Activated CD4-positive, alpha-beta memory T cell treated with anti-CD3 and anti-CD28 coated beads, Interleukin-2, amount 10 ng/mL, durations not matched to agents 7 days and 5 days (primary cell): ENCODE measurements at regions of chr12 and their contacts with region 1.

Region 1: GRCh38 chr12:6533923-6534694 is at the start of gene GAPDH:
- DNase-seq: peak; percentile 93
- H3K4me3 Mint-ChIP-seq: peak within 1 kb of the TSS; percentile 96
- H3K27ac Mint-ChIP-seq: peak within 1 kb of the TSS; percentile 97
- H3K4me1 Mint-ChIP-seq: peaks cover 53% of the 10 kb centered on the region
- H3K27me3 Mint-ChIP-seq: no peaks in the 10 kb centered on the region
- total RNA-seq, gene GAPDH: 5,691 to 5,753 TPM

Region 2: DNA sequence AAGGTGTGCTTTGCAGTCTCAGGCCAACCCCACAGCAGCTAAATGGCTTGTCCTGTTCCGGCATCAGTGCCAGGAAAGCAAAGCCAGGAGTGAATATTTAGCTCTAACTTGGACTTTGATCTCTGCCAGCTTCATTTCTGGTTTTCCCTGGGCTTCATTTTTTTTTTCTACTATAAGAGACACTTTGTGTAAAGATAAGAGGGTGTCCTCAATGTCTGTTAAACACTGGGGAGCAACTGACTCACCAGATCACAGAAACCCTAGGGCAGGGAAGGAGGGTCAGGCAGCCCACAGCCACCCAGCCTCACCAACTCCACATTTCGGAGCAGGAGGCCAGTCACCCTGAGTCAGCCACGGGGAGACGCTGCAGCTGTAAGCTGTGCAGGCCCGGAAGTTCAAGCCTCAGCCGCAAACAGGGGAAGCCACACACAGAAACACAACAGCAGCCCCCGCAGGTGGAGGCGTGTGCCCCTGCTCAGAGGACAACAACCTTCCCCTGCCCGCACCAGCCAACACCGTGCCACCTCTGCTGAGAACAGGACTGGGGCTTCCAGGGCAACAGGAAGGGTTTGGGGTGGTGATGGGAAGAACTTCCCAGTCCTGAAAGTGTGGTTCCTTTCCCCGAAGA is 198.5 kb before region 1 on chr12:
- CTCF ChIA-PET with region 1: interaction called, 5 read pairs
- POLR2A ChIA-PET with region 1: interaction called, 10 read pairs
- DNase-seq: peak; percentile 90
- H3K4me3 Mint-ChIP-seq: no peak overlapping the region
- H3K27ac Mint-ChIP-seq: no peak overlapping the region
- H3K4me1 Mint-ChIP-seq: no peaks in the 10 kb centered on the region
- H3K27me3 Mint-ChIP-seq: no peaks in the 10 kb centered on the region

Region 3: GRCh38 chr12:6443361-6443983 is 90.6 kb before region 1 on chr12:
- CTCF ChIA-PET with region 1: interaction called, 7 read pairs
- POLR2A ChIA-PET with region 1: interaction called, 15 read pairs
- DNase-seq: no peak
- H3K4me3 Mint-ChIP-seq: peak overlapping the region; percentile 38
- H3K27ac Mint-ChIP-seq: peak overlapping the region; percentile 71
- H3K4me1 Mint-ChIP-seq: peaks cover 54% of the 10 kb centered on the region
- H3K27me3 Mint-ChIP-seq: no peaks in the 10 kb centered on the region

Region 4: DNA sequence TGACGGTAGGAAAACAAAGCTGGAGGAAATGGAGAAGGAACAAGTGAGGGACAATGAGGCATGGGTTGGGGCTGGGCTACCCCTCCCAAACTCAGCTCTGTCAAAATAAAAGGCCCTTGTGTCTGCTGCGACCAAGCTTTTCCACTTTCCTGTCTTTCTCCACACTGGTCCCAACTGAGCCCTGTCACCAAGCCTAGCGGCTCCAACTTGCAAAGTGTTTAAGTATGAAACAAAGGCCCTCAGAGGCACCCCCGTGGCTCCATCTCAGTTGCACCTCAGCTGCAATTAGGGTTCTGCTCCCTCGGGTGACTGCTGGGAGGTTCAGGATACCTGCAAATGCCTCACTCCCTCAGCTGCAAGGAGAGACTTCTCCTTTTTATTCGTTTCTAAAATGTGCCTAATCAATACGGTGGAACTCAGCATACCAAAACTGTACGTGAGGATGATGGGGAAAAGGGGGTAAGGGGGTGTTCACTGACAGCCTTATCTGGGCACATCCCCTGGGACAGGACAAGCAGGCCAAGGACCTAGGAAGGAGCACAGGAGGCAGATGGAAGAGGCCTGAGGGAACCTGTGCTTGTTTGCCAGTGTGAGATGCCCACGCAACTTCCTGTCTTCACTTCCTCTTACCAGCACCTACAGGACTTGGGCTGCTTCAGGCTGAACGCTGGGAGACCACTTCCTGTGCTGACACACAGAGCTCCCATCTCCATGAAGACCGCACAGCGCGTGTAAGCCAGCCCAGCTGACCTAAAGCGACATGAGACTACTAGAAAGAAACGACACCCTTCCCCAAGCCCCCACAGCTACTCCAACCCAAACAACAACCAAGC is 72.5 kb before region 1 on chr12:
- CTCF ChIA-PET with region 1: interaction called, 11 read pairs
- POLR2A ChIA-PET with region 1: interaction called, 77 read pairs
- DNase-seq: peak; percentile 91
- H3K4me3 Mint-ChIP-seq: peak overlapping the region; percentile 74
- H3K27ac Mint-ChIP-seq: peak overlapping the region; percentile 98
- H3K4me1 Mint-ChIP-seq: peaks cover 84% of the 10 kb centered on the region
- H3K27me3 Mint-ChIP-seq: no peaks in the 10 kb centered on the region

Region 5: DNA sequence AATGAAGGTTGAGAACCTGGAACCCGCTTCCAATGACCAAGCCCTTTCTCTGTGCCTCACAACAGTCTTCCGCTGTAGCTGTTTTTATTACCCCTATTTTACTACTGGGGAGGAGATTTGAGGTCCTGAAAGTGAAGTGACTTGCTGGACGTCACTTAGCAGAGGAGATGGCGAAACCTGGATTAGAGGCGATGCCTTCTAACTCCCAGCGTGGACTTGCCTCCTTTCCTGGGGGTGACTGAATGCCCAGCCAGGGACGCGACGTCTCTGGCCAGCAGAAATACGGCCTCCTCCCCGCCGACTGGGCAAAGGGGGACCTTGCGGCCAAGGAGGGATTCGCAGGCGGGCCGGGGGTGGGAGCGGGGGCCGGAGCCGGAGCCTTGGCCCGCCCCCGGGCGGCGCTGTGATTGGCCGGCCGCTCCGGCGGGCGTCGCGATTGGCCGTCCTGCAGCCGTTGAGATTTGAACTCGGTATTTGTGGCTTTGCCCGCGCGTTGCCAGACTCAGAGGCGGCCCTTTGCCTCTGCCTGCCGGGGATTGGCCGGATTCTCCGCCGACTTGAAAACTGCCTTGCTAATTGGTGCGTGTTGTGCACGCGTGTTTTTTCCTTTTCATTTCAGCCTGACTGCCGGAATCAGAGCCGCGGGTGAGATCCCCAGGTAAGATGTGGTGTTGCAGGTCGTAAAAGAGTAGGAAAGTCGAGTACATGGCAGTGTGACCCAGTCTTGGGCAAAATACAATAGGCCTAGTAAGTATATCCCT is 40.4 kb before region 1 on chr12 and contains the start of gene NCAPD2:
- CTCF ChIA-PET with region 1: interaction called, 17 read pairs
- POLR2A ChIA-PET with region 1: interaction called, 51 read pairs
- DNase-seq: peak; percentile 98
- H3K4me3 Mint-ChIP-seq: peak within 1 kb of the TSS; percentile 96
- H3K27ac Mint-ChIP-seq: peak within 1 kb of the TSS; percentile 98
- H3K4me1 Mint-ChIP-seq: peaks cover 44% of the 10 kb centered on the region
- H3K27me3 Mint-ChIP-seq: no peaks in the 10 kb centered on the region
- total RNA-seq, gene NCAPD2: 153 to 156 TPM

Region 6: DNA sequence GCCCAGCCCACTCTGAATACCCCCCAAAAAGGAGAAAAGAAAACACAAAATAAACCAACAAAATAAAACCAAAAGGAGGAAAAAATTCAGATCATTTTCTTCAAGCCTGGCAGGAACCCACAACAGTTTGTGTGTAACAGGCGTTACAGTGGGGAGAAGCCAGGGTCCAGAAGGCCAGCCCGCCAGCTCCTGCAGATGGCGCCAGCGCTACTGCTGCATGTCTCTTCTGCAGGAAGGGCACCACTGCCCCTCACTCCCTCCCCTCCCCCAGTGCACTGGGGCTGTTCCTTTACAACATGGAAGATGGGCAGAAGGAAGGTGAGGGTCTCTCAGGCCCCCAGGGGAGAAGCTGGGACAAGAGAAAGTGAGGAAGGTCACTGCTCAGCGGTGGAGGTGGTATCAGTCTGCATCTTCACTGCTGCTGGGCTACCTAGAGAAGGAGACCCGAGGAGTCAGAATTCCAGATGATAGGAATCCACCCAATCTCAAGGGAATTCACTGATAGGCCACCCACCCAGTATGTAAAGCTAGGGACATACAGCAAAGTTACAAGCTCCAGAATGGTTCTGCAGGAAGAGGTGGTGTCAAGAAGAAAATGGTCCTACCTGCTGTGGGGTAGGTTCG is 36.3 kb after region 1 on chr12:
- CTCF ChIA-PET with region 1: interaction called, 4 read pairs
- POLR2A ChIA-PET with region 1: interaction called, 28 read pairs
- DNase-seq: peak; percentile 56
- H3K4me3 Mint-ChIP-seq: peak overlapping the region; percentile 43
- H3K27ac Mint-ChIP-seq: peak overlapping the region; percentile 49
- H3K4me1 Mint-ChIP-seq: peaks cover 54% of the 10 kb centered on the region
- H3K27me3 Mint-ChIP-seq: no peaks in the 10 kb centered on the region

Region 7: DNA sequence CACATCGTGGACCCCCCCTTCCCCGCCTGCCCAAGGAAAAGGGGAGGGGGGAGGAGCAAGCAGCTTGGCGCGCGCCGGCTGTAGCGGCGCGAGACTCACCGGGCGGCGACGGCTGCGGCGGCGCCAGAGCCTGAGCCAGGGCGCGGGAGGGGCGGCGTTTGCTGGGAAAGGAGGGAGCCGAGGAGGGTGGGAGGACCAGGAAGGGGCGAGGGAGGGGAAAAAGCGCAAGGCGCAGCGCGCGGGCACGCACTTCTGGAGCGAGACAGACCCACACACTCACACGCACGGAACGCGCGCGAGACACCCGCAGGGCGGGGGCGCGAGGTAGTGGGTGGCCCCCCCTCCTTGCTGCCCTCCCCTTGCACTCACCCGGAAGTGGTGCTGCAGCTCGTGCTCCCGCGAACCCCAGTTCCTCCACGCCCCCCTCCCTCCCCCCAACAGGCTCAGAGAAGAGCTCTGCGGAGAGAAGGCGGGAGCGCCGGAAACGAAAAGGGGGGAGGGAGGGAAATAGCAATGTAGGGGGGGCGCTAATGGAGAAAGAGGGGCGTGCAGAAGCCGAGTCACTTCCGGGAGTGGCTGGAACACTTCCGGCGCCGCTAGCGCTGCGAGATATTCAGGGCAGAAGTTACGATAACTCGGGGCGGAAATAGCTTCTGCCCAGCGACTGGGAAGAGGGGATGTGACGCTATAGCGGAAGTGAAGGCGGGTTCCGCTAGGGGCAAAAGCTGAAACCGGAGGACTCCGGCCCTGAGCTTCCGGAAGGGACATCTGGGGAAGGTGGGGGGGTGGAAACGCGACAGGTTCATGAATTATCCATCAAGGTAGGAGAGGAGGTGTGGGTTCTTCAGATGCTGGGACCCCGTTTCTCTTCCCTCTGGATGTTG is 155.1 kb after region 1 on chr12 and contains the start of gene ZNF384:
- CTCF ChIA-PET with region 1: no interaction called
- POLR2A ChIA-PET with region 1: interaction called, 16 read pairs
- DNase-seq: peak; percentile 97
- H3K4me3 Mint-ChIP-seq: peak within 1 kb of the TSS; percentile 87
- H3K27ac Mint-ChIP-seq: peak within 1 kb of the TSS; percentile 91
- H3K4me1 Mint-ChIP-seq: peaks cover 55% of the 10 kb centered on the region
- H3K27me3 Mint-ChIP-seq: no peaks in the 10 kb centered on the region
- total RNA-seq, gene ZNF384: 69.5 to 78.1 TPM

Region 8: DNA sequence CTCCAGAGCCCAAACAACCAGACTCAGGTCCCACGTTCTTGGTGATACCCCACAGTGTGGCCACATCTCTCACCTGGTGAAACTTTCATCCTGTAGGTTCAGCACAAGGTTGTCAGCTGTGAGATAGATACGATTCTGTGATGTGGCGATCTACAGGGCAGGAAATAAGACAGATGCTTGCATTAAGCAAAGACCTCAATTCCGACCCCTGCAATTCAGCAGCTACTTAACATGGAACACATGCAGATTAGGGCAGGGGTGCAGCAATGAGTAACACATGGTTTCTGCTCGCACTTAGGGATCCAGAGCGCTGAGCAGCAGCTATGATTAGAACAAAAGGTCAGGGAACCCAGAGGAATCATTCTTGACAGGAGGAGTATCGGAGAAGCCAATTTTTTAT is 432.2 kb after region 1 on chr12:
- CTCF ChIA-PET with region 1: no interaction called
- POLR2A ChIA-PET with region 1: no interaction called
- DNase-seq: no peak
- H3K4me3 Mint-ChIP-seq: no peak overlapping the region
- H3K27ac Mint-ChIP-seq: peak overlapping the region; percentile 63
- H3K4me1 Mint-ChIP-seq: peaks cover 71% of the 10 kb centered on the region
- H3K27me3 Mint-ChIP-seq: no peaks in the 10 kb centered on the region